ENCODE measurements at regions of chr19 and their contacts with region 1.

Region 1: DNA sequence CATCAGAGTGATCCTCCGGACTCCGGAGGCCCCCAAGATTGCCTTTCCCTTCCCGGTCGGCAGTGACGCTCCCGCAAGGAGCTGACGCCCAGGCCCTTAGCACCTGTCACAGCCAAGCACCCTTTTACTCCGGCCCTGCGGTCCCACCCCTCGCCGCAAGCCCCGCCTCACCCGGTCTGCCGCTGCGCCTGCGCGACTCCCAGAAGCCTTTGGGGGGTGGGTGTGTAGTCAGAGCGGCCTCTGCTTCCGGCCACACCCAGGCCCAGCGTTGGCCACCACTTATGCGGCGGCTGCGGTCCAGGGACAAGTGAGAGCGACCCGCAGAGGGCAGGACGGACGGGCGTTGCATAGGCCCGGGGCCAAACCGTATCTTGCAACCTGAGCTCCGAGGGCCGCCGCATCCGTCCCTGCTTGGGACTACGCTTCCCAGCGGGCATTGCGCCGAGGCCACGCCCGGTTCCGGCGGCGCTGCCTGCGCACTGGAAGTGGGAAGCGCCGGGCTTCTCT is 441 bp upstream of the ZFP28 start:
- DNase-seq: peak; percentile 79 to 87
- ATAC-seq: peak; percentile 98 to 99
- H3K4me3 ChIP-seq: peak overlapping the region; percentile 82 to 99 (median 89)
- H3K27ac ChIP-seq: peak overlapping the region; percentile 87 to 97 (median 94)
- H3K4me1 ChIP-seq: peaks cover 7 to 13% of the 10 kb centered on the region in 2 donors
- H3K27me3 ChIP-seq: no peaks in the 10 kb centered on the region
- CTCF ChIP-seq: peak in 1 of 5 experiments; percentile 25
- POLR2A ChIP-seq: peak in 1 of 2 donors; percentile 34

Region 2: DNA sequence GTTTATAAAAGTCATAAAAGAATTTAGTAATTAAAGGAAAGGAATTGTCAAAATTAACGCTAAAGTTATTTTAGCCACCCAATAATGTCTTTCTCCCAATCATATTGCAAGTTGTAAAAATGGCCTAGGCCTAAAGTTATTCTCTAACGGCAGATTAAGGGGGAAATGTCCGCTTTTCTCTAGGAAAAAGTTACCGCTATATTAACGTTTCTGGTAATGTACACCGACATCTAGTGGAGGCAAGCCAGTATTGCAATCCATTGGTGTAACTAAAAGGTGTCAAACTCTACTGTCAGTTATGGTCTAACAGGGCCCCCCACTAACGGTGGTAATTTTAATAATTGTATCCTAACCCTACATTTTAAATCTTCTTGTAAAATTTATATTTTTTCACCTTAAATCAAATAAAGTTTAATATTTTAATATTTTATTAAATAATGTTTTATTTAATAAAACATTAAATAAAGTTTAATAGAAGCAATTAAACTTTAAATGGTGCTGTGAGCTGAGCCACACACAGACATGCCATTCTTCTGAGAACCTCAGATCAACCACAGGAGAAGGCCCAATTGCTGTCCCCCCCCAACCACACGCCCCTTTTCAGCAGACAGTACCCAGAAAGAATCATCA is 187.8 kb before region 1 on chr19:
- in situ Hi-C with region 1: no loop called
- intact Hi-C with region 1: no loop called
- DNase-seq: peak in 1 of 2 donors; percentile 4
- ATAC-seq: no peak
- H3K4me3 ChIP-seq: peak overlapping the region in 1 of 4 donors; percentile 18
- H3K27ac ChIP-seq: no peak overlapping the region
- H3K4me1 ChIP-seq: no peaks in the 10 kb centered on the region
- H3K27me3 ChIP-seq: no peaks in the 10 kb centered on the region
- CTCF ChIP-seq: peak; percentile 59 to 86 (median 77)
- POLR2A ChIP-seq: no peak

Region 3: GRCh38 chr19:56403764-56404704 is 134.3 kb before region 1 on chr19 and contains the start of gene ZNF583:
- in situ Hi-C with region 1: no loop called
- intact Hi-C with region 1: loop called (anchors 2 kb)
- DNase-seq: peak; percentile 89 to 97
- ATAC-seq: peak; percentile 96 to 99
- H3K4me3 ChIP-seq: peak within 1 kb of the TSS; percentile 66 to 95 (median 84)
- H3K27ac ChIP-seq: peak within 1 kb of the TSS; percentile 90 to 93 (median 92)
- H3K4me1 ChIP-seq: peaks cover 12 to 14% of the 10 kb centered on the region in 2 donors
- H3K27me3 ChIP-seq: no peaks in the 10 kb centered on the region
- CTCF ChIP-seq: no peak
- POLR2A ChIP-seq: no peak
- total RNA-seq, gene ZNF583: 3.5 to 9.2 (median 4.3) TPM

Region 4: DNA sequence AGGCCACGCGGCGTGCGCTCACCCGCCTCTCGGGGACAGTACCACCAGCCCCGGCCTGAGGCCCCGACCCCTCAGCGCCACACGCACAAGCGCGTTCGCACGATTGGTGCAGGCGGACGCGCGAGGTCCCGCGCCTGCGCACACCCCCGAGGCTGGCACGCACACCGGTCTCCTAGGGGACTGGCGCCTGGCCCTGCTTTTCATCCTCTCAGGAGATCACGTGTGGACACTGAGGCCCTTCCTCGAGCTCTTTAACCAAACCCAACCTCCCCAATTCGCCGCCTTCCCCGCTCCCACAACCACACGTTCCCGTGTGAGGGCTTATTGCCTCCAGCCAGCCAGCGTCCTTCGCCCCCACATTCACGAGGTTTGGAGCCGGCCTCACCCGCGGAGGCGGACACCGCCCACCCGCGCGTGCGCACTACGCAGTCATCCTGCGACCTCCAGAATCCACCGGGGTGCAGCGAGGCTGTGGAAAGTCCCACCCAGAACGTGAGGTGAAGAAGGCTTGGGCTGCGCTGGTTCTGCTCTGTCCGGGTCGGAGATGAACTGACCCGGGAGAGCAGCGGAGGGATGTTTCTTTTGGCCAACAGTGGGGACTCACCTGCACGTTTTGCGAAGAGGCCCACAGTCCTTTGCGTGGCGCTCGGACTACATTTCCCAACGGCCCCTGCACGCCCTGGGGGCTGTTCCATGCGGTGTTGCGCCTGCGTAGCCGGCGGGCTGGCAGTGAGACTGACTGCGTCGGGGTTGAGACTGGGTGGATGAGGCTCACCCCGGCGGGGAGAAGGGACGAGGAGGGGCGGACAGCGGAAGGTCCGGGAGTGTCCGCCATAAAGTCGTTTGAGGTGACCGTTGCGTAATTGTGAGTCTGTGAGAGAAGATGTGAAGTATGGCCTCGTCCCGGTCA is 60.6 kb before region 1 on chr19:
- in situ Hi-C with region 1: no loop called
- intact Hi-C with region 1: loop called (anchors 2 kb)
- DNase-seq: peak; percentile 71 to 73
- ATAC-seq: peak; percentile 87 to 95
- H3K4me3 ChIP-seq: peak overlapping the region; percentile 46 to 83 (median 69)
- H3K27ac ChIP-seq: peak overlapping the region; percentile 54 to 86 (median 83)
- H3K4me1 ChIP-seq: peaks cover 0 to 5% of the 10 kb centered on the region in 2 donors
- H3K27me3 ChIP-seq: no peaks in the 10 kb centered on the region
- CTCF ChIP-seq: no peak
- POLR2A ChIP-seq: peak; percentile 31 to 42

Region 5: GRCh38 chr19:56594783-56595547 is 56.7 kb after region 1 on chr19 and contains the start of gene ZNF71:
- in situ Hi-C with region 1: no loop called
- intact Hi-C with region 1: loop called (anchors 1 kb)
- DNase-seq: peak; percentile 71 to 75
- ATAC-seq: peak; percentile 77 to 90
- H3K4me3 ChIP-seq: peak within 1 kb of the TSS; percentile 73 to 98 (median 84)
- H3K27ac ChIP-seq: peak within 1 kb of the TSS; percentile 76 to 82 (median 78)
- H3K4me1 ChIP-seq: peaks cover 12 to 18% of the 10 kb centered on the region in 2 donors
- H3K27me3 ChIP-seq: no peaks in the 10 kb centered on the region
- CTCF ChIP-seq: no peak
- POLR2A ChIP-seq: peak in 1 of 2 donors; percentile 28
- total RNA-seq, gene ZNF71: 6.7 to 7.5 (median 7.4) TPM

Region 6: GRCh38 chr19:56633021-56633420 is 94.7 kb after region 1 on chr19:
- in situ Hi-C with region 1: no loop called
- intact Hi-C with region 1: no loop called
- DNase-seq: no peak
- ATAC-seq: no peak
- H3K4me3 ChIP-seq: no peak overlapping the region
- H3K27ac ChIP-seq: no peak overlapping the region
- H3K4me1 ChIP-seq: no peaks in the 10 kb centered on the region
- H3K27me3 ChIP-seq: no peaks in the 10 kb centered on the region
- CTCF ChIP-seq: no peak
- POLR2A ChIP-seq: no peak

Region 7: DNA sequence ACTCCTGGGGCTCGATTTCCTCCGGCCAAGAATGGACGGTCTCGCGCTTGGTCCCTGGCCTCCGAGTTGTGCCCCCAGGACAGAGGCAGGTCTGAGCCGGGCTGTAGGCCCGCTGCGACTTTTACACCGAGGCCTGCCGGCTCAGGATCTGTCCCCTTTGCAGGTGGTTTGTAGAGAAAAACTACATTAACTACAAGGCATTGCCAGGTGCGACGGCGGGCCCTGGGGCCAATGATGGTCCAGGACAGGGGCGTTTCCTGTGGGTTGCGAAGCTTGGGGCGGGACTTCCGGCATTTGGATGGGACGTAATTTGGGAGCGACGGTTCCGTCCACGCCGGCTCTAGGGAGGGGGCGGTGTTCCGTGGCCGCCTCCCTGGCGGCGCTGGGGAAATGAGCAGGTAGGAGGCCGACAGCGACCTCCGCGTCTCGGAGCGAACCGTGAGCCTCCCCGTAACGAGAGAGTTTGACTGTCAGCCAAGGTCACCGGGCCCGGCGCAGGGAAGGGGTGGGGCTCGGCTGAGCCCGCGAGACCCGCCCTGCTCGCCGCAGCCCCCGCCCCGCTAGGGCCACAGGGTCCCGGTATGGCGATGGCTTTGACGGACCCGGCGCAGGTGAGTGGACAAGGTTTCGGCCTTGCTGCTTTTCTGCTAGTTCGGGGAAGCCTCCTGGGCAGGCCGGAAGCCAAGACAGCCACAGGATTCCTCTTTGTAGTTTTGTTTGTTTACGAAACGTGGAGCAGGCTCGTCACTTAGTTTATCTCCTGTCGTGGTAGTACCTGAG is 702.2 kb after region 1 on chr19 and contains the start of gene ZNF805:
- in situ Hi-C with region 1: no loop called
- intact Hi-C with region 1: loop called (anchors 1 kb)
- DNase-seq: peak; percentile 94 to 97
- ATAC-seq: peak; percentile 98 to 99
- H3K4me3 ChIP-seq: peak within 1 kb of the TSS; percentile 93 to 98 (median 97)
- H3K27ac ChIP-seq: peak within 1 kb of the TSS; percentile 89 to 97 (median 96)
- H3K4me1 ChIP-seq: peaks cover 23% of the 10 kb centered on the region in 2 donors
- H3K27me3 ChIP-seq: no peaks in the 10 kb centered on the region
- CTCF ChIP-seq: peak in 3 of 5 experiments; percentile 29 to 38 (median 36)
- POLR2A ChIP-seq: peak; percentile 62 to 67
- total RNA-seq, gene ZNF805: 9.3 to 20.2 (median 14.8) TPM

Measured in gastrocnemius medialis (tissue), 4 donors.